Calu3 (cell line): ENCODE measurements at regions of chrX and their contacts with region 1.

Region 1: GRCh38 chrX:10360116-10360515 is 203.3 kb downstream of the CLCN4 start:
- DNase-seq: no peak
- H3K4me3 Mint-ChIP-seq: no peak overlapping the region
- H3K27ac Mint-ChIP-seq: no peak overlapping the region
- H3K4me1 Mint-ChIP-seq: no peaks in the 10 kb centered on the region
- H3K27me3 Mint-ChIP-seq: no peaks in the 10 kb centered on the region
- CTCF ChIP-seq: no peak

Region 2: DNA sequence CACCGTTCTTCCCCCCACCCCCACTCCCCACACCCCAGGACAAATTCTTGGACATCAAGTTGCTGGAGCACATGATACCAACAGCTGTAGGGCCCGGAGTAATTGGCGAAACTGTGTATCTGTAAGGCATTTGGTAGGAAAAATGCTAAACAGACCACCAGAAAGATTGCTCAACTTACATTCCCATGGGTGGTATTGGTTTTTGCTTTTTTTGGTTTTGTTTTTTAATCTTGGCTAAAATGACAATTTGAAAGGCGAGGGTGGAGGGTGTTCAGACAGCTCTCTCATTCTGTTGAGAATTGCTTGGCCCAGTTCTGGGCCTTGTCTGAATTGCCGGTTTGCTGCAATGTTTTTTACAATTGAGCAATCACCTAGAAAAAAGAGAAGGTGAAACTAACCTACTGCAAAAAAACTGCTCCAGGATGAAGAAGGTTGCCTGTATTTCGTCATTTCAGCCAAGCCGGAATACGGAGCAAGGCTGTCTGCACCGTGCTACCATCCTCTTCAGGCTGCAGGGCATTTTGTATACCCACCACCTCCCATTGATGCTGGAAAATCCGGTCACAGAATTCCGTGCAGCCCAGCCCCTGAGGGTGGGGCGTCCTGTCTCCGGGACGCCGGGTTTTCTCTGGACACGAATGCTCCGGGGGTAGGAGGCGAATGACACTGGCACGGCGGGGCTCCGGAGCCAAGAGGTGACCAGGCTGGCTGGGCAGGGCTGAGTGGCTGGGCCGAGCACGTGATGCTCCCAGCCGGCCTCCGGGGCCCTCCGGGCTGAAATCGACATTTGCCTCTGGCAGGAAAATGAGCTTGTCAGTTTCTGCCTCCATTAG is 203.7 kb before region 1 on chrX and contains the start of gene CLCN4:
- CTCF ChIA-PET with region 1: no interaction called
- intact Hi-C with region 1: no loop called
- DNase-seq: peak; percentile 84
- H3K4me3 Mint-ChIP-seq: peak within 1 kb of the TSS; percentile 75
- H3K27ac Mint-ChIP-seq: peak within 1 kb of the TSS; percentile 82
- H3K4me1 Mint-ChIP-seq: peaks cover 20% of the 10 kb centered on the region
- H3K27me3 Mint-ChIP-seq: no peaks in the 10 kb centered on the region
- CTCF ChIP-seq: no peak
- total RNA-seq, gene CLCN4: 9.9 and 13.3 TPM in 2 replicates

Region 3: GRCh38 chrX:10166731-10167151 is 193.4 kb before region 1 on chrX:
- CTCF ChIA-PET with region 1: no interaction called
- intact Hi-C with region 1: no loop called
- DNase-seq: peak; percentile 50
- H3K4me3 Mint-ChIP-seq: no peak overlapping the region
- H3K27ac Mint-ChIP-seq: no peak overlapping the region
- H3K4me1 Mint-ChIP-seq: peaks cover 15% of the 10 kb centered on the region
- H3K27me3 Mint-ChIP-seq: no peaks in the 10 kb centered on the region
- CTCF ChIP-seq: no peak

Region 4: GRCh38 chrX:10512258-10512657 is 152.1 kb after region 1 on chrX:
- CTCF ChIA-PET with region 1: interaction called, 12 read pairs
- intact Hi-C with region 1: no loop called
- DNase-seq: peak; percentile 23
- H3K4me3 Mint-ChIP-seq: no peak overlapping the region
- H3K27ac Mint-ChIP-seq: no peak overlapping the region
- H3K4me1 Mint-ChIP-seq: peaks cover 36% of the 10 kb centered on the region
- H3K27me3 Mint-ChIP-seq: no peaks in the 10 kb centered on the region
- CTCF ChIP-seq: no peak